A549 (cell line): ENCODE measurements at regions of chr22 and their contacts with region 1.

Region 1: DNA sequence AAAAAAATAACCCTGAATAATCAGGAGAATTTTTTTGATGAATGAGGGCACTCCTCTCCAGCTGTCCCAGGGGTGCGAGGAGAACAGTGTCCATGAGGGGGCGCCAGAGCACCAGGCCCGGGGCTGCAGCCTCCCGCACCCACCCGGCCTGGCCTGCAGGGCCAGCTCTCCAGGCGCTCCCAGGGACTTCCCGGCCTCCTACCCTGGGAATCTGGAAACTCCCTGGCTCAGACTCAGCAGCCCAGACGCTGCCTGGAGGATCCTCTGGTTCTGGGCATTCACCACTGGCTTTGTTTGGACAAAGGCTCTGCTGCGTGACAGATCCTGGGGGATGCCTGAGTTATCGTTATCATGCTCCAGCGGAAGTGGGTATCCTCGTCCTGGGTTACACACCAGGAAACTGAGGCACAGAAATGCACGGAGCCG is 31.0 kb downstream of the MCM5 start:
- DNase-seq: peak; percentile 75 to 82
- ATAC-seq: peak; percentile 93 to 97
- H3K4me3 ChIP-seq: no peak overlapping the region
- H3K27ac ChIP-seq: peak overlapping the region; percentile 68 to 85
- H3K4me1 ChIP-seq: peaks cover 23% of the 10 kb centered on the region
- CTCF ChIP-seq: peak; percentile 77
- EP300 ChIP-seq: no peak
- POLR2A ChIP-seq: no peak
- RAD21 ChIP-seq: peak; percentile 85 to 92

Region 2: DNA sequence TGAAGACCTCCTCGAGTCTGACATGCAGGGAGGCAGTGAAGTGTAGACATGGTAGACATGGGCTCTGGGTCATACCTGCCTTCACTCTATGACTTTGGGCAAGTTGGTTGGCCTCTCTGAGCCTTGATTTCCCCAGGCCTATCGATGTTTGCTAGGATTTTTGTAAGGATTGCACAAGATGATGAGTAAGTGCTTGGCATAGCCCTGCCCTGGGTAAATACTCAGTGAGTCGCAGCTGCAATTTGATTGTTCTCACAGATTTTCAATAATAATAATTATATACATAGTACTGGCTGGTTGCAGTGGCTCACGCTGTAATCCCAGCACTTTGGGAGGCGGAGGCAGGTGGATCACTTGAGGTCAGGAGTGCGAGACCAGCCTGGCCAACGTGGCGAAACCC is 12.8 kb before region 1 on chr22:
- CTCF ChIA-PET with region 1: interaction called, 32 read pairs
- POLR2A ChIA-PET with region 1: no interaction called
- DNase-seq: no peak
- ATAC-seq: peak in 1 of 2 experiments; percentile 40; a peak in 3 of 6 replicates
- H3K4me3 ChIP-seq: no peak overlapping the region
- H3K27ac ChIP-seq: peak overlapping the region; percentile 46 to 80; a peak in 5 of 6 replicates
- H3K4me1 ChIP-seq: peaks cover 17% of the 10 kb centered on the region
- CTCF ChIP-seq: no peak
- EP300 ChIP-seq: no peak
- POLR2A ChIP-seq: no peak
- RAD21 ChIP-seq: no peak

Region 3: DNA sequence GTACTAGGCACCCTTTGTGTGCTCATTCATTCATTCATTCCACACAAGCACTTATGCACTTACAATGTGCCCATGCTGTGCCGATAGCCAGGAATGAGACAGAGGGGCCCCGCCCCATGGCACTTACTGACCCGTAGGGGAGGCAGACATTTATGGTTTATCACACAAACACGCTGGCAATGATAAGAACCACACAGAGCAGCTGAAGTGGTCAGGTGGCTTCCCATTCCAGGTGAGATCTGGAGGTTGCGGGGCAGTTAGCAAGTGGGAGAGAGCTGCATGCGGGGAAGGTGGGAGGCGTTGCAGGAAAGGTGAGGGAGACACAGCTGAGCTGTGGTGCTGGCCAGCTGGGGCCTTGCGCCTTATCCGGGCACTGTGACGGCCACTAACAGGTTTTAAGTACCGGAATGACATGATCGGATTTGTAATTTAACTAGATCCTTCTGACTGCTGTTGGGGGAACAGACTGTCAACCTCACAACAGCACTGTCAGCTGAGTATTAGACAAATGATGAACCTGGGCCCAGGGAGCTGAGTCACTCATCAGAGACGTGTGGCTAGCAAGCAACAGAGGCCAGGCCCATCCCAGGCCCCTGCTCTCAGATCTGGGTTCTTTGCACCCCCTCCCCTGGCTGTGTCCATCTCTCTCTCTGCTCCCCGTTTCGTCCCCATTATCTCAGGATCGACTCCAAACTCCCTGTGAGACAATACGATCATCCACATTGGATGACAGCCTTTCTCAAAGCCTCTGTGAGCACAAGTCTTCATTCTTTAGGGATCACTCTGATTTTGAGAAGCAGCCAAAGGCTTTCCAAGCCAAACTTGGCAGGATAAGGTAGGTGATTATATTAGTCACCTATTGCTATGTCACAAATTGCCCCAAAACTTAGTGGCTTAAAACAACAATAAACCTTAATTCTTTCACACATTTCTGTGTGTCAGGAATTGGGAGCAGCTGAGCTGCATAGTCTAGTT is 138.1 kb after region 1 on chr22:
- CTCF ChIA-PET with region 1: interaction called, 13 read pairs
- POLR2A ChIA-PET with region 1: no interaction called
- DNase-seq: no peak
- ATAC-seq: peak in 1 of 2 experiments; percentile 69; a peak in 3 of 6 replicates
- H3K4me3 ChIP-seq: no peak overlapping the region
- H3K27ac ChIP-seq: peak overlapping the region; percentile 30 to 55; a peak in 3 of 6 replicates
- H3K4me1 ChIP-seq: peaks cover 15% of the 10 kb centered on the region
- CTCF ChIP-seq: no peak
- EP300 ChIP-seq: no peak
- POLR2A ChIP-seq: no peak
- RAD21 ChIP-seq: no peak

Region 4: GRCh38 chr22:35589071-35589952 is 158.4 kb after region 1 on chr22:
- CTCF ChIA-PET with region 1: interaction called, 121 read pairs
- POLR2A ChIA-PET with region 1: interaction called, 3 read pairs
- DNase-seq: peak; percentile 87 to 97
- ATAC-seq: peak; percentile 94 to 95
- H3K4me3 ChIP-seq: no peak overlapping the region
- H3K27ac ChIP-seq: peak overlapping the region; percentile 97 to 99
- H3K4me1 ChIP-seq: peaks cover 67% of the 10 kb centered on the region
- CTCF ChIP-seq: no peak
- EP300 ChIP-seq: peak; percentile 82 to 92; a peak in 4 of 5 replicates
- POLR2A ChIP-seq: no peak
- RAD21 ChIP-seq: peak; percentile 19 to 39; a peak in 3 of 5 replicates

Region 5: DNA sequence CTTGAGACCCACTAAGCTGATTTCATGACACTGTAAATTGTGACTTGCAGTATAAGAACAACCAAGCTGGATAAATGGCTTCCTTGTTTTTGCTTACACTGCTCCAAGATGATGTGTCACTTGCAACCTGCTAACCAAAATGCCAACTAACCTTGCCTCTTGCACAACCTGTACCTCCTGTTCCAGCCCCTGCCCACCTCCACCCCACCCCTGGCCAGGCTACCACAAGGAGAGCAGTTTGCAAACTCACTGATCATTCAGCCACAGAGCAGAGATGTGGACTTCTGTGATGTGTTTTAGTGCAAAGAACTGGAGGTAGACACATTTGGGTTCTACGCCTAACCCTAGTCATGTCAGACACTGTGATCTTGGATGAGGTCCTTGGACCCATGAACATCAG is 213.1 kb after region 1 on chr22:
- CTCF ChIA-PET with region 1: no interaction called
- POLR2A ChIA-PET with region 1: interaction called, 11 read pairs
- DNase-seq: no peak
- ATAC-seq: no peak
- H3K4me3 ChIP-seq: no peak overlapping the region
- H3K27ac ChIP-seq: no peak overlapping the region
- H3K4me1 ChIP-seq: peaks cover 9% of the 10 kb centered on the region
- CTCF ChIP-seq: no peak
- EP300 ChIP-seq: no peak
- POLR2A ChIP-seq: no peak
- RAD21 ChIP-seq: no peak

Region 6: DNA sequence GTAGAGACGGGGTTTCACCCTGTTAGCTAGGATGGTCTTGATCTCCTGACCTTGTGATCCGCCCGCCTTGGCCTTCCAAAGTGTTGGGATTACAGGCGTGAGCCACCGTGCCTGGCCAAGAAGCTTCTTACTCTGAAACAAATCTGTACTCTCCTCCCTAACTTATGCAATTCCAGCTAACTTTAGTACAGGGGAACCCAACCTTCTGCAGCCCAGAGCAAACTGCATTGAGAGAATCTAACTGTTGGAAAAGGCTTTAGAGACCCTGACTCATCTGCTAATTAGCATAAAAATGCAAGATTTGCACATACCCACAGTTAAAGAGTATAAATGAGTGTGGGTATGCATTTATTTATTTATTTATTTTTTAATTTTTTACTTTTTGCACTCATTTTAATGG is 351.6 kb after region 1 on chr22:
- CTCF ChIA-PET with region 1: no interaction called
- POLR2A ChIA-PET with region 1: no interaction called
- DNase-seq: no peak
- ATAC-seq: no peak
- H3K4me3 ChIP-seq: no peak overlapping the region
- H3K27ac ChIP-seq: peak overlapping the region in 1 of 2 experiments; percentile 87; a peak in 3 of 6 replicates
- H3K4me1 ChIP-seq: peaks cover 63% of the 10 kb centered on the region
- CTCF ChIP-seq: no peak
- EP300 ChIP-seq: no peak
- POLR2A ChIP-seq: no peak
- RAD21 ChIP-seq: no peak

Region 7: DNA sequence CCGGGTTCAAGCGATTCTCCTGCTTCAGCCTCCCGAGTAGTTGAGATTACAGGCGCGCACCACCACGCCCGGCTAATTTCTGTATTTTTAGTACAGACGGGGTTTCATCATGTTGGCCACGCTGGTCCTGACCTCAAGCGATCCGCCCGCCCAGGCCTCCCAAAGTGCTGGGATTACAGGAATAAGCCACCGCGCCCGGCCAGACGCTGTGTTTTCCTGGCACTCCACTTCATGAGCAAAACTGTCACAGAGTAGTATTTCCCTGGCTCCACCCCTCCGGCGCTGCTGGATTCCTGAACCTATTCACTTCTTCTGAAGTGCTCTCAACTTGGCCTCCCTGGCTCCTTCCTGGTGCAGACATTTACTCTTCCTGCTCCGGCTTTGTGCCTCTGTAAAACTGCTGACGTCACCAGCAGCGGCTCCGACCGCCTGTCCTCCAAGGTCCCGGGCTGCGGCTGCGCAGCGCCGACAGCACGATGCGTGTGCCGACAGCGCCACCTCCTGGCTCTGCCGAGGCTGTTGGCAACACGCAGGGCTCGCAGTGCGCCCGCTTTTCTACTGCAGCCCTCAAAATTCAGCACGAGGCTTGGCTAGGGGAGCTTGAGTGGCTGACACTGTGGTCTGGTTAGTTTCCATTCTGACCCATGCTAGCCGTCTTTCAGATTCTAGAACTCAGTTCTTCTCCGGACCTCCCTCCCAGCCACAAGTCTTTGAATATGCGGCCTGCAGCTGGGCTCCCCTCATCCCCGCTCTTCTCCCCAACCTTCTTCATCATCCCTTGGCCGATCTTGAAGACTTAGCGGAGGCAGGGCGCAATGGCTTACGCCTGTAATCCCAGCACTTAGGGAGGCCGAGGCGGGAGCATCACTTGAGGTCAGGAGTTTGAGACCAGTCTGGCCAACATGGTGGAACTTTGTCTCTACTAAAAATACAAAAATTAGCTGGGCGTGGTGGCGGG is 693.0 kb after region 1 on chr22:
- CTCF ChIA-PET with region 1: interaction called, 16 read pairs
- POLR2A ChIA-PET with region 1: interaction called, 3 read pairs
- DNase-seq: peak; percentile 62 to 93
- ATAC-seq: peak; percentile 97 to 99
- H3K4me3 ChIP-seq: no peak overlapping the region
- H3K27ac ChIP-seq: peak overlapping the region; percentile 77 to 90
- H3K4me1 ChIP-seq: peaks cover 6% of the 10 kb centered on the region
- CTCF ChIP-seq: peak; percentile 87
- EP300 ChIP-seq: no peak
- POLR2A ChIP-seq: peak; percentile 30; the same call in 1 of the 2 replicates
- RAD21 ChIP-seq: peak; percentile 93 to 98